Esophagus squamous epithelium (tissue), 5 donors: ENCODE measurements at regions of chr13 and their contacts with region 1.

Region 1: GRCh38 chr13:99501184-99501847 is at the start of gene TM9SF2:
- DNase-seq: peak; percentile 84
- H3K4me3 ChIP-seq: peak within 1 kb of the TSS; percentile 74 to 86 (median 81)
- H3K27ac ChIP-seq: peak within 1 kb of the TSS; percentile 93 to 97 (median 94)
- H3K4me1 ChIP-seq: peaks cover 15 to 85% (median 32%) of the 10 kb centered on the region in 3 donors
- H3K27me3 ChIP-seq: no peaks in the 10 kb centered on the region
- CTCF ChIP-seq: peak in 1 of 6 experiments; percentile 29
- POLR2A ChIP-seq: peak in 3 of 4 donors; percentile 43 to 86 (median 51)
- total RNA-seq, gene TM9SF2: 60.5 to 118 (median 79.0) TPM

Region 2: DNA sequence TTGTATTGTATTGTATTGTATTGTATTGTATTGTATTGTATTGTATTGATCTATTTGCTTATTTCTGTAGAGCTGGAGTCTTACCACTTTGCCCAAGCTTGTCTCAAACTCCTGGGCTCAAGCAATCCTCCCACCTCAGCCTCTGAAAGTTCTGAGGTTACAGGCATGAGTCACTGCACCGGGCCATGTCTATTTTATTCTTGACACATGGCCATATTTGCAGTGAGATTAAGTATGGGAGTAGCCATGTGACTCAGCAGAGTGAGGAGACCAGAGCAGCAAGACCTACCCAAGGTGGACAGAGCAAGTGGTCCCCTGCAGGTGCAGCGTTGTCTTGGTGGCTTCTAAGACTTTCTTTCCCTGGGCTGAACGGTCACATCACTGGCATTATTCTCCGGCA is 349.8 kb before region 1 on chr13:
- intact Hi-C with region 1: no loop called
- DNase-seq: no peak
- H3K4me3 ChIP-seq: no peak overlapping the region
- H3K27ac ChIP-seq: peak overlapping the region; percentile 41 to 81 (median 60)
- H3K4me1 ChIP-seq: peaks cover 8 to 48% (median 18%) of the 10 kb centered on the region in 3 donors
- H3K27me3 ChIP-seq: no peaks in the 10 kb centered on the region
- CTCF ChIP-seq: no peak
- POLR2A ChIP-seq: no peak

Region 3: DNA sequence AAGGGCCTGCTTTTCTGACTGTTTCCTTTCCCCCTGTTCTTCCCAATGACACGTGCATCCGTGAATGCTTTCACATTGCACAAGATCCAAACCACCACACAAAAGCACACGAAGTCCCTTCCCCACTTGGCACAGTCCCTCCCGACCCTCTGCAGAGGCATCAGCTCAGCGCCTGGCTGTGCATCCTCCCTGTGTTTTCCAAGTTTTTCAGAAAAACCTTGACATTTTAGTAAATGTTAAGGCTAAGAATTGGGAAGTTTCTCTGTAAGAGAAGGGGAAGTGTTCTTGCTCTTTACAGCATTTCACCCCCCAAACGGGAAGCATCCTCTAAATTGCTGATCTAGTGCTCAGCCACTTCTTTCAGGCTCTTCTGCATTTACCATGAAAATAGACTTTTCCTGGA is 94.5 kb before region 1 on chr13:
- intact Hi-C with region 1: no loop called
- DNase-seq: no peak
- H3K4me3 ChIP-seq: no peak overlapping the region
- H3K27ac ChIP-seq: no peak overlapping the region
- H3K4me1 ChIP-seq: peaks cover 0 to 11% (median 0%) of the 10 kb centered on the region in 3 donors
- H3K27me3 ChIP-seq: peaks cover 0 to 18% (median 0%) of the 10 kb centered on the region in 4 donors
- CTCF ChIP-seq: no peak
- POLR2A ChIP-seq: no peak

Region 4: DNA sequence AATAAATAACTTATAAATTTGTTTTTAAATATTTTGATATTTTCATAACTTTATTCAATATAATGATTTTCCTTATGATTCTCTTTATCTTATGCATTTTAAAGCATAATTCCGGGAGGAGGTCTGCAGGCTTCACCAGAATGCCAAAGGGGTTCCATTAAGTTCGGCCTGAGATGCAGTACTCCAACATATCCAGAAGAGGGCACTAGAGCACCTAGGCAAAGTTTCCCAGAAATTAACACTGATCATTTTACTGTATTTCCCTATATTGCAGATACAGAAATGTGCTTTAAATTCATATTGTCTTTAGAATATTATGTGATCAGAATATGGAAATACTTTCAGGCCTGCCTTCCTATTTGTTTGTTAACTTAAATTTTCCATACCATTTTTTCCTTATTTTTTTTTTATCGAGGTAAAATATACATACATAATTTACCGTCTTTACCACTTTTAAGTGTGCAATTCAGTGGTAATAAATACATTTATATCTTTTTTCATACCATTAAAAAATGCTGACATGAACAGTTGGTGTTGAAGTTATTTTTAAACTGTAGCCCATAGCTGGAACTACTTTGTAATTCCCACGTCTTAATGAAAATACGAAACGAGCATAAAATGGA is 58.9 kb before region 1 on chr13:
- intact Hi-C with region 1: loop called (anchors 10 kb)
- DNase-seq: no peak
- H3K4me3 ChIP-seq: no peak overlapping the region
- H3K27ac ChIP-seq: no peak overlapping the region
- H3K4me1 ChIP-seq: no peaks in the 10 kb centered on the region
- H3K27me3 ChIP-seq: peaks cover 0 to 24% (median 0%) of the 10 kb centered on the region in 4 donors
- CTCF ChIP-seq: peak; percentile 90 to 97 (median 94)
- POLR2A ChIP-seq: no peak